ENCODE measurements at regions of chr1 and their contacts with region 1.

Region 1: GRCh38 chr1:93715529-93716126 is 34.0 kb upstream of the BCAR3 start:
- DNase-seq: peak; percentile 55
- H3K4me3 Mint-ChIP-seq: no peak overlapping the region
- H3K27ac Mint-ChIP-seq: peak overlapping the region; percentile 81
- H3K4me1 Mint-ChIP-seq: peaks cover 66% of the 10 kb centered on the region
- H3K27me3 Mint-ChIP-seq: peaks cover 5% of the 10 kb centered on the region

Region 2: GRCh38 chr1:93680757-93681550 is 34.7 kb before region 1 on chr1:
- CTCF ChIA-PET with region 1: interaction called, 10 read pairs
- POLR2A ChIA-PET with region 1: interaction called, 7 read pairs
- DNase-seq: peak; percentile 65
- H3K4me3 Mint-ChIP-seq: peak overlapping the region; percentile 81
- H3K27ac Mint-ChIP-seq: no peak overlapping the region
- H3K4me1 Mint-ChIP-seq: peaks cover 27% of the 10 kb centered on the region
- H3K27me3 Mint-ChIP-seq: peaks cover 66% of the 10 kb centered on the region